ENCODE measurements at regions of chr6 and their contacts with region 1.

Region 1: GRCh38 chr6:110949679-110950285 is 8.7 kb upstream of the GTF3C6 start:
- DNase-seq: peak in 1 of 35 experiments; percentile 60
- ATAC-seq: peak in 1 of 4 experiments; percentile 42
- H3K4me3 ChIP-seq: no peak overlapping the region
- H3K4me3 Mint-ChIP-seq: no peak overlapping the region
- H3K27ac ChIP-seq: no peak overlapping the region
- H3K27ac Mint-ChIP-seq: no peak overlapping the region
- H3K4me1 ChIP-seq: no peaks in the 10 kb centered on the region
- H3K4me1 Mint-ChIP-seq: peaks cover 0 to 6% (median 5%) of the 10 kb centered on the region in 3 donors
- H3K27me3 ChIP-seq: no peaks in the 10 kb centered on the region
- H3K27me3 Mint-ChIP-seq: no peaks in the 10 kb centered on the region

Region 2: DNA sequence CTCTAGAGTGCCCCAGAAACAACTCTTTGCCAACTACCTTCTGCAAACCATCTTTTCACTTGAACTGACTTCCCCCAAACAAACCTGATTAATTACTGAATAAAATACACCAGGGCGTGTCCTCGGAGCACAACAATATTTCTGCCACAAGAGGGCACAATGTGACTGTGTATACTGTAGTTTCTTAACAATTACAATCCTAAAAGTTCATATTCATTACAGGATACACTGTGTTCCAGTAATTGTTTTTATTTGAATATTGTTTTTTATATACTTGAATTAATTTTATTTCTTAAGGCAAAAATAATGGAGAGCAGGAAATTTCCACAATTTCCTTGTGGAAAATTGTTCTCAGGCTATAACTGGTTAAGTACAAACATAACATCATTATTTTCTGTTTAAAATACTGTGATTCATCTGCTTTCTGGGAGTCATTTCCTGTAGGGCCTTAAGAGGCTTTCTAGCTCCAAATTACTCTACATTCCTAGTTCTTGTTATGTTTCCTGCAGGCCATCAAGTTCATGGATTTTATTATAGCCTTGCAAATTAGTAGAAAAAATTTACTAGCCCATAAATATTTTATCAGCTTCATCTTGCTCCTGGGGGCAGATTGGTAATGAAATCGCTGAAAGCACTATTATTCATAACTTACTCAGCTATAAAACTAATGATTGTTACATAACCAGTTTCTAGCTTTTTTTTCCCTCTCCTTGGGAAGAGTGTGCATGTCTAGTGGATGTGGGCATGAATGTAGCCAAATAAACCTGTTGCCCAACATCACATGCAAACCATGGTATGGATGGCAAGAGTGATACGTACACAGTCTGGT is 421.5 kb before region 1 on chr6:
- CTCF ChIA-PET with region 1: interaction called in 1 of 2 experiments, 11 read pairs
- POLR2A ChIA-PET with region 1: no interaction called
- DNase-seq: peak in 29 of 35 experiments; percentile 2 to 79 (median 33)
- ATAC-seq: peak in 3 of 4 experiments; percentile 54 to 61 (median 58)
- H3K4me3 ChIP-seq: no peak overlapping the region
- H3K4me3 Mint-ChIP-seq: no peak overlapping the region
- H3K27ac ChIP-seq: no peak overlapping the region
- H3K27ac Mint-ChIP-seq: no peak overlapping the region
- H3K4me1 ChIP-seq: no peaks in the 10 kb centered on the region
- H3K4me1 Mint-ChIP-seq: no peaks in the 10 kb centered on the region
- H3K27me3 ChIP-seq: peaks cover 0 to 4% of the 10 kb centered on the region in 2 experiments
- H3K27me3 Mint-ChIP-seq: peaks cover 0 to 7% of the 10 kb centered on the region in 2 donors